Activated T-helper 2 cell treated with anti-CD3 and anti-CD28 coated beads, Interferon-gamma antibody, Interleukin-2, Interleukin-4, amounts not matched to agents 10 μg/mL and 5 μg/mL and 100 μg/mL, durations not matched to agents 14 hours and 24 hours and 36 hours (primary cell): ENCODE measurements at regions of chr16 and their contacts with region 1.

Region 1: DNA sequence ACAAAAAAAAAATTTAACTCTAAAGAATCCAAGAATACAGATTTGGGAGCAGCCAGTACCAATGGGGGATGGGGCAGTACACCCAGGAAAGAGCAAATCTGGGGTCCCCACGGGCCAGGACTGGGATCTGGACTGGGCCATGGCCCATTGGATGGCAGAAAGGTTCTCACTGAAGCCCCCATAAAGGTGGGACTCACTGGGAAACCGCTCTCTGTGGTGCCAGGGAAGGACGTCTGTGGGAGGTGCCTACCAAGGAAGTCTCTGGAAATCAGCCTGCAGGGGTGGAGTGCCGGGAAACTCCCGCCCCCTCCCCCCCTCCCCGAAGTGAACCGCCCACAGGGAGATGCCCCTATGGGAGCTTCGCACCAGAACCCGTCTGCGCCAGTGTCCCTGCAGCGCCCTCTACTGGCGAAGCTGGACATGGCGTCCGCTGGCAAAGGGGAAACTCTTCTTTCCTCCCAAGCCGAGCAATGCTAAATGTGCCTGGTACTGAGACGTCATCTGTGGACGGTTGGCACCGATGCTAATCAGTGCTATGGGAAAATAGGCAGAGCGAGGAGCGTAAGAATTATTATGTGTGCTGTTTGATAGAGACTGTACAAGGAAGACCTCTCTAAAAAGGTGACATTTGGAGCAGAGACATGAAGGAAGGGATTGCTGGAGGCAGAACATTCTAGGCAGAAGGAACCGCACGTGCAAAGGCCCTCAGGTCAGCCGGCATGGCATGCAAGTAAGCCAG is 671.1 kb downstream of the WWOX start:
- DNase-seq: peak; percentile 62
- H3K4me3 Mint-ChIP-seq: no peak overlapping the region
- H3K27ac Mint-ChIP-seq: peak overlapping the region; percentile 2
- H3K4me1 Mint-ChIP-seq: peaks cover 35% of the 10 kb centered on the region
- H3K27me3 Mint-ChIP-seq: peaks cover 7% of the 10 kb centered on the region

Region 2: GRCh38 chr16:79717333-79718137 is 947.0 kb after region 1 on chr16:
- intact Hi-C with region 1: loop called (anchors 10 kb)
- DNase-seq: no peak
- H3K4me3 Mint-ChIP-seq: peak overlapping the region; percentile 47
- H3K27ac Mint-ChIP-seq: peak overlapping the region; percentile 63
- H3K4me1 Mint-ChIP-seq: peaks cover 40% of the 10 kb centered on the region
- H3K27me3 Mint-ChIP-seq: peaks cover 7% of the 10 kb centered on the region